AG04450 (cell line): ENCODE measurements at regions of chr3 and their contacts with region 1.

Region 1: DNA sequence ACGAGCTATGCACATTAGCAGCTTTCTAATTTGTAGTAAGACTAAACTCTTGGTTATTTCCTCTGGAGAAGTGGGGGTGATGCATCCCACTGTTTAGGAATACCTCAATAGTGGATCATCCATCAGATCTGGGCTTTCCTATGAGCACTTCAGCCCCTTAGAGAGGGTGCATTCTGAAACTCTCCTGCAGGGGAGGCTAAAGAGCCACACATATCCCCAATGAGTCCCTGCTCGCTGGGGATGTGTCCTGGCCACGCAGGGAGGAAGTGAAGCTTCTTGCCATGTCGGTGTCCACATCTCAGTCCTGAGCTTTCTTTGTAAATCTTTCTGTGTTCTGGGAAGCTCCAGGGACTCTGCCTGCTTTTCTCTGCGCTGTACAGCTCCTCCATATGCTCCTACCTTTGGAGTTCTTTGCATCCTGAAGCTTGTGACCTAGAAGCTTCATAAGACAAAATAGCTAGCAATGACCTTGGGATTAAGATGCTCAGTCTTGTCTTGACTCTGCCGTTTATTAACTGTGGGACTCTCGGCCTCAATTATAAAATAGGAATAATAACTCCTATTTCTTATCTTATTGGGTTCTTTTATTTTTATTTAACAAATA is 28.3 kb upstream of the MASP1 start:
- DNase-seq: peak; percentile 34
- H3K4me3 ChIP-seq: no peak overlapping the region
- H3K27ac ChIP-seq: no peak overlapping the region
- H3K27me3 ChIP-seq: peaks cover 15% of the 10 kb centered on the region
- CTCF ChIP-seq: peak; percentile 93

Region 2: GRCh38 chr3:187164885-187165543 is 154.8 kb before region 1 on chr3:
- CTCF ChIA-PET with region 1: interaction called, 13 read pairs
- POLR2A ChIA-PET with region 1: no interaction called
- DNase-seq: no peak
- H3K4me3 ChIP-seq: no peak overlapping the region
- H3K27ac ChIP-seq: no peak overlapping the region
- H3K27me3 ChIP-seq: peaks cover 20% of the 10 kb centered on the region
- CTCF ChIP-seq: peak; percentile 67

Region 3: GRCh38 chr3:187255314-187255713 is 64.5 kb before region 1 on chr3:
- CTCF ChIA-PET with region 1: interaction called, 15 read pairs
- POLR2A ChIA-PET with region 1: no interaction called
- DNase-seq: no peak
- H3K4me3 ChIP-seq: no peak overlapping the region
- H3K27ac ChIP-seq: no peak overlapping the region
- H3K27me3 ChIP-seq: no peaks in the 10 kb centered on the region
- CTCF ChIP-seq: no peak

Region 4: GRCh38 chr3:187305881-187306280 is 13.9 kb before region 1 on chr3:
- CTCF ChIA-PET with region 1: interaction called, 33 read pairs
- POLR2A ChIA-PET with region 1: no interaction called
- DNase-seq: no peak
- H3K4me3 ChIP-seq: no peak overlapping the region
- H3K27ac ChIP-seq: no peak overlapping the region
- H3K27me3 ChIP-seq: no peaks in the 10 kb centered on the region
- CTCF ChIP-seq: no peak

Region 5: DNA sequence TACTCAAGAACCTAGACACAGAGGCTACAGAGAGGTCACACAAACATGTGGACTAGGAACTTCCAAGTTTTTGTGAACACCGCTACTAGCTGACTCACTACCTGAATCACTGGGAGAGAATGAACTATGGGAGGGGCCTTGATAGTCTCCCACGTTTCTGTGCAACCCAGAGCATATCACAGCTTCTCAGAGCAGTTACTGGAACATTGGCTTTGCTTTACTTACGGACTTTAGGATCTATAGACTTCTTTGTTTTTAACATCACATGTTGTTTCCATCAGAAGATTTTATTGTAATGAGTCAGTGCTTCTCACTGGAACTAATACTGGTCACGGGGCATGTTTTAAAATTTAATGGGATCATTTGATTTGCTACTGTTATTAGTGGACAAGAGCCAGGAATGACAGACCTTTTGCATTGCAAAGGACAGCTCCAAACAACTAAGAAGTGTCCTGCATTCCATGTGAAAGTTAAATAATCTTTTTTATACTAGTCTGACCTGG is 84.0 kb after region 1 on chr3:
- CTCF ChIA-PET with region 1: interaction called, 17 read pairs
- POLR2A ChIA-PET with region 1: no interaction called
- DNase-seq: peak; percentile 86
- H3K4me3 ChIP-seq: no peak overlapping the region
- H3K27ac ChIP-seq: peak overlapping the region; percentile 80
- H3K27me3 ChIP-seq: no peaks in the 10 kb centered on the region
- CTCF ChIP-seq: no peak

Region 6: DNA sequence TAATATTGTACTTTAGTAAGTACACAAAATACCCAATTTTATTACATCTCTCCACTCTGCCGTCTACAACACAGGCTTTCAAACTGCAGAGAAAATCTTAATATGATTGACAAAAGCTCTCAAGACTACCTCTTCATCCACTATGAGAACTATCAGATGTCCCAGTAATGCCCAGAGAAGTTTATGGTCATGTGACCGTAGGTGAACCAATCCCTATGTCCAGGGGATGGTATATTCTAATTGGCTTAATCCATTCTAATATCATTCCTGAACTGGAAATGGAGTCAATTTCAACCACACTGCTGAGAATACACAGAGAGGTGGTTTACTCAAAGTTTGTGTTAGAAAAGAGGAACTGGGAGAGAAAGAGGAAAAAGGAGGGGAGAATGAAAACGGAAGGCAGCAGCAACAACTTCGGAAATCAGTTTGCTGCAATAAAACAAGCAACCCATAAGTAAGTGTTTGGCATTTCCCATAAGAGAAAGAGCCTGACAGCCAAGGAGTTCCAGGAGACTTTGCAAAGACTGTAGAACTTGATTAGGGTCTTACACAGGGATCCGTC is 343.1 kb after region 1 on chr3:
- CTCF ChIA-PET with region 1: interaction called, 44 read pairs
- POLR2A ChIA-PET with region 1: no interaction called
- DNase-seq: no peak
- H3K4me3 ChIP-seq: no peak overlapping the region
- H3K27ac ChIP-seq: no peak overlapping the region
- H3K27me3 ChIP-seq: no peaks in the 10 kb centered on the region
- CTCF ChIP-seq: no peak

Region 7: DNA sequence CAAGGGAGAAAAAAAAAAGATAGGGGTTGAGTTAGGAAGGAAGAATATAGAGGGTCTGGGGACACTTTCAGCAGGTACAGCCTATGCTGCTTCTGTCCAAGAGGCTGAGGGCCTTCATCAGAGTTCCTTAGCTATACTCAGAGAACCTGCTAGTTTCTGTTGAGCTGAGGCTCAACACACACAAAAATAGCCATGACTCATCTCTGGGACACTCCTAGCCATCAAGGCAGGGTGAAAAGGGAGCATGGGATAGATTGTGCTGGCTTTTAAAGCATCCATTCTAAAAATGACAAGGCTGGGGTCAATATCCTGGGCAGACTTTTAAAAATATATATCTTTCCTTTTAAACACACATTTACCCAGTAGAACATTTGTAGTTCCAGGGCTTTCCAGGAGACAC is 385.4 kb after region 1 on chr3:
- CTCF ChIA-PET with region 1: interaction called, 119 read pairs
- POLR2A ChIA-PET with region 1: no interaction called
- DNase-seq: no peak
- H3K4me3 ChIP-seq: no peak overlapping the region
- H3K27ac ChIP-seq: no peak overlapping the region
- H3K27me3 ChIP-seq: peaks cover 2% of the 10 kb centered on the region
- CTCF ChIP-seq: no peak